K562 (cell line): ENCODE measurements at regions of chr17 and their contacts with region 1.

Region 1: DNA sequence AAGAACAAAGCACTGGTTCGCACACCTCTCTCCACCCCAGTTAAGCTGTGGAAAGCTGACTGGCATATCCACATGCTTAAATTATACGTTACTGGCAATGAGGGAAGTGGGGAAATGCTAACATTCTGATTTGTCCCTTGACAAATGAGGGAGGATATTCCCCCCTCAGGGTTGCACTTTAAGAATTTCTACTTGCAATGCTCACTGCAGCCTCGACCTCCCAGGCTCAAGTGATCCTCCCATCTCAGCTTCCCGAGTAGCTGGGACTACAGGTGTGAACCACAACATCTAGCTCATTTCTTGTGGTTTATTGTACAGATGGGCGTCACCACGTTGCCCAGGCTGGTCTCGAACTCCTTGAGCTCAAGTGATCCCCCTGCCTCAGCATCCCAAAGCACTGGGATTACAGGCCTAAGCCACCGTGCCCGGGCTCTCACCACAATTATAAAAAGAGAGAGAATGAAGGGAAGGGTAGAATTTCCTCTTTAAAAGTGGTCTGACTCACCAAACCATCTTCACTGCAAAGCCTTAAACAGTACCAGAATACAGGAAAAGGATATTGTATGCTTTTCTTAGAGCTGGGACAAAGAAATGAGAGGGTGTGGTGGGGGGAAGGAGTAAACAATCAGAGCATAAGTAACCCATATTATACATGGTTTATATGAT is 38.9 kb downstream of the KANSL1 start:
- DNase-seq: no peak
- ATAC-seq: peak; percentile 4; the same call in 1 of the 3 replicates
- H3K4me3 ChIP-seq: no peak overlapping the region
- H3K27ac ChIP-seq: no peak overlapping the region
- H3K4me1 ChIP-seq: peaks cover 7 to 49% of the 10 kb centered on the region in 2 experiments; a peak in 4 of 5 replicates
- H3K27me3 ChIP-seq: no peaks in the 10 kb centered on the region
- CTCF ChIP-seq: no peak
- EP300 ChIP-seq: no peak
- POLR2A ChIP-seq: no peak
- RAD21 ChIP-seq: no peak

Region 2: DNA sequence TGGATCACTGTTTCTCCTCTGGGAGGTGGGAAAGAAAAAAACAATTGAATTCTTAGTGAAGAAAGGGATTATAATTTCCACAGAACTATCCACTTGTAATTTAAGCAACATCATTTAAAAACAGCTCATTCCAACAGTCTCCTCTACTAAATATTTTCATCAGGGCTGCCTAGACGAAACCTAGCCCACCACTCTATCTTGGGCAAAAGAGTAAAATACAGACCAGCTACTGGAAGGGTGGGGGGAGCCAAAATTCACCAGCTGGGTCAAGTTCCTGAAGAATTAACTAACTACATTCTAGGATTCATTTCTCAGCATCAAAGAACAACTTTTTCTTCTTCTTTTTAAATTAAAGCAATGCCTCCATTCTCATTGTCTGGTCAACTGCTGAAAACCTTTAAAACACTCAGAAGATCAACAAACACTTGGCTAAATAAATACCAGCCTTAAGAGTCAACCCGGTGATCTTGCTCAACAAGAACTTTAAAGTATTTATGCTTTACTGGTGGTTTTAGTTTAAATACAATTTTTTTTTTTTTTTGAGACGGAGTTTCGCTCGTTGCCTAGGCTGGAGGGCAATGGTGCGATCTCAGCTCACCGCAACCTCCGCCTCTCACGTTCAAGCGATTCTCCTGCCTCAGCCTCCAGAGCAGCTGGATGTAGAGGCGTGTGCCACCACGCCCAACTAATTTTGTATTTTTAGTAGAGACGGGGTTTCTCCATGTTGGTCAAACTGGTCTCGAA is 13.7 kb after region 1 on chr17:
- CTCF ChIA-PET with region 1: interaction called, 3 read pairs
- POLR2A ChIA-PET with region 1: interaction called, 29 read pairs
- in situ Hi-C with region 1: no loop called
- intact Hi-C with region 1: no loop called
- DNase-seq: no peak
- ATAC-seq: no peak
- H3K4me3 ChIP-seq: no peak overlapping the region
- H3K27ac ChIP-seq: no peak overlapping the region
- H3K4me1 ChIP-seq: peaks cover 0 to 3% of the 10 kb centered on the region in 2 experiments; a peak in 2 of 5 replicates
- H3K27me3 ChIP-seq: no peaks in the 10 kb centered on the region
- CTCF ChIP-seq: no peak
- EP300 ChIP-seq: no peak
- POLR2A ChIP-seq: no peak
- RAD21 ChIP-seq: no peak

Region 3: GRCh38 chr17:46193626-46194392 is 39.5 kb after region 1 on chr17:
- CTCF ChIA-PET with region 1: no interaction called
- POLR2A ChIA-PET with region 1: no interaction called
- in situ Hi-C with region 1: no loop called
- intact Hi-C with region 1: no loop called
- DNase-seq: peak; percentile 96 to 99 (median 97)
- ATAC-seq: peak; percentile 94
- H3K4me3 ChIP-seq: peak overlapping the region; percentile 85
- H3K27ac ChIP-seq: peak overlapping the region; percentile 90
- H3K4me1 ChIP-seq: peaks cover 12 to 32% of the 10 kb centered on the region in 2 experiments
- H3K27me3 ChIP-seq: no peaks in the 10 kb centered on the region
- CTCF ChIP-seq: peak in 1 of 3 experiments; percentile 26; a peak in 3 of 6 replicates
- EP300 ChIP-seq: no peak
- POLR2A ChIP-seq: peak; percentile 92
- RAD21 ChIP-seq: no peak